HepG2 (cell line): ENCODE measurements at regions of chr3 and their contacts with region 1.

Region 1: GRCh38 chr3:32296256-32297204 is 58.0 kb downstream of the CMTM8 start:
- DNase-seq: peak; percentile 47
- ATAC-seq: peak; percentile 79
- H3K4me3 ChIP-seq: no peak overlapping the region
- H3K27ac ChIP-seq: no peak overlapping the region
- H3K4me1 ChIP-seq: peaks cover 38% of the 10 kb centered on the region
- H3K27me3 ChIP-seq: no peaks in the 10 kb centered on the region
- CTCF ChIP-seq: peak; percentile 91
- EP300 ChIP-seq: no peak
- POLR2A ChIP-seq: no peak
- RAD21 ChIP-seq: peak; percentile 86

Region 2: GRCh38 chr3:32334675-32335074 is 38.1 kb after region 1 on chr3:
- CTCF ChIA-PET with region 1: interaction called, 26 read pairs
- POLR2A ChIA-PET with region 1: no interaction called
- in situ Hi-C with region 1: loop called (anchors 5 kb)
- intact Hi-C with region 1: no loop called
- DNase-seq: no peak
- ATAC-seq: peak; percentile 79
- H3K4me3 ChIP-seq: no peak overlapping the region
- H3K27ac ChIP-seq: no peak overlapping the region
- H3K4me1 ChIP-seq: peaks cover 25% of the 10 kb centered on the region
- H3K27me3 ChIP-seq: no peaks in the 10 kb centered on the region
- CTCF ChIP-seq: peak; percentile 62
- EP300 ChIP-seq: no peak
- POLR2A ChIP-seq: no peak
- RAD21 ChIP-seq: peak; percentile 45; the same call in 1 of the 2 replicates

Region 3: GRCh38 chr3:32340039-32340438 is 43.5 kb after region 1 on chr3:
- CTCF ChIA-PET with region 1: interaction called, 26 read pairs
- POLR2A ChIA-PET with region 1: no interaction called
- in situ Hi-C with region 1: loop called (anchors 5 kb)
- intact Hi-C with region 1: loop called (anchors 1 kb)
- DNase-seq: peak; percentile 80
- ATAC-seq: peak; percentile 94
- H3K4me3 ChIP-seq: no peak overlapping the region
- H3K27ac ChIP-seq: no peak overlapping the region
- H3K4me1 ChIP-seq: peaks cover 35% of the 10 kb centered on the region
- H3K27me3 ChIP-seq: no peaks in the 10 kb centered on the region
- CTCF ChIP-seq: peak; percentile 88
- EP300 ChIP-seq: no peak
- POLR2A ChIP-seq: no peak
- RAD21 ChIP-seq: peak; percentile 78

Region 4: DNA sequence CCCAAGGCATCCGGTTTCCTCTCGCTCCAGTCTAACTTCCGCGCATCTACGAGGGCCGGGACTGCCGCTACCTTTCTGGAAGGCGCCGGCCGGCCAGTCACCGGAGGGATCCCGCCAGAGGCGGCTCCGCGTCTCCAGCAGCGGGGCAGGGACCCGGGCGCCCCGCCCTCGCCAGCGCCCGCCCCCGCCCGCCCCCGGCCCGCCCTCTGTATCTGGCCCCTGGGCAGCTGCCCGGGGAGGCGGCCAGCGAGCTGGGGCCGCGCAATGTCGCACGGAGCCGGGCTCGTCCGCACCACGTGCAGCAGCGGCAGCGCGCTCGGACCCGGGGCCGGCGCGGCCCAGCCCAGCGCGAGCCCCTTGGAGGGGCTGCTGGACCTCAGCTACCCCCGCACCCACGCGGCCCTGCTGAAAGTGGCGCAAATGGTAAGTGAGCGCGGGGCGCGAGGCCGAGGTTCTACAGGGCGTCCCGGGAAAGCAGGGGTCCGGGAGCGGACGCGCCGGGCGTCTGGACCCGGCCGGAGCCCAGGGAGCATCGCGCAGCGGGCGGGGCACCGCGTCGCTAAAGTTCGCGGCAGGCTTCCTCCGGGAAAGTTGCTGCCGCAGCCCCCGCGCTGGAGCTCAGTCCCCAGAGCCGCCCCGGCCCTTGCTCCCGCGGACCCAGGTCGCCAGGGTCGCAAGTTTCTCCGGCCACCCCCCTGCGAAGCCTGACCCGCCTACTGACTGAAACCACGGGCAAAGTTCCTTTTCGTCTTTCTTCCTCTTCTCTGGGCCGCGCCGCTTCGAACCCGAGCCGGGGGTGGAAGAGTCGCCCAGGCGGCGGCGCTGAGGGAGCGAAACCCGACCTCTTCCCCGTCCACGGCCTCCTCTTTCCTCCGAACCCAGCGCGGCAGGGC is 95.4 kb after region 1 on chr3 and contains the start of gene CMTM7:
- CTCF ChIA-PET with region 1: no interaction called
- POLR2A ChIA-PET with region 1: no interaction called
- in situ Hi-C with region 1: no loop called
- intact Hi-C with region 1: loop called (anchors 10 kb)
- DNase-seq: peak; percentile 39
- ATAC-seq: peak; percentile 91
- H3K4me3 ChIP-seq: peak within 1 kb of the TSS; percentile 55 to 90 (median 85)
- H3K27ac ChIP-seq: peak within 1 kb of the TSS; percentile 84
- H3K4me1 ChIP-seq: peaks cover 26% of the 10 kb centered on the region
- H3K27me3 ChIP-seq: no peaks in the 10 kb centered on the region; a peak in 1 of 5 replicates
- CTCF ChIP-seq: no peak; the same call in 1 of the 2 replicates
- EP300 ChIP-seq: no peak
- POLR2A ChIP-seq: peak; percentile 70 to 88
- RAD21 ChIP-seq: no peak
- total RNA-seq, gene CMTM7: 16.3 and 20.9 TPM in 2 replicates